ENCODE measurements at regions of chr6 and their contacts with region 1.

Region 1: GRCh38 chr6:24902782-24903181 is 33.0 kb downstream of the RIPOR2 start:
- DNase-seq: no peak
- H3K4me3 Mint-ChIP-seq: no peak overlapping the region
- H3K27ac Mint-ChIP-seq: peak overlapping the region; percentile 84
- H3K4me1 Mint-ChIP-seq: peaks cover 90% of the 10 kb centered on the region
- H3K27me3 Mint-ChIP-seq: no peaks in the 10 kb centered on the region

Region 2: GRCh38 chr6:24891004-24891403 is 11.8 kb before region 1 on chr6:
- CTCF ChIA-PET with region 1: interaction called, 18 read pairs
- intact Hi-C with region 1: loop called (anchors 1 kb)
- DNase-seq: peak; percentile 31
- H3K4me3 Mint-ChIP-seq: peak overlapping the region; percentile 25
- H3K27ac Mint-ChIP-seq: peak overlapping the region; percentile 90
- H3K4me1 Mint-ChIP-seq: peaks cover 91% of the 10 kb centered on the region
- H3K27me3 Mint-ChIP-seq: no peaks in the 10 kb centered on the region

Region 3: GRCh38 chr6:25181923-25182322 is 279.1 kb after region 1 on chr6:
- CTCF ChIA-PET with region 1: no interaction called
- intact Hi-C with region 1: no loop called
- DNase-seq: no peak
- H3K4me3 Mint-ChIP-seq: no peak overlapping the region
- H3K27ac Mint-ChIP-seq: no peak overlapping the region
- H3K4me1 Mint-ChIP-seq: peaks cover 24% of the 10 kb centered on the region
- H3K27me3 Mint-ChIP-seq: peaks cover 4% of the 10 kb centered on the region

Region 4: DNA sequence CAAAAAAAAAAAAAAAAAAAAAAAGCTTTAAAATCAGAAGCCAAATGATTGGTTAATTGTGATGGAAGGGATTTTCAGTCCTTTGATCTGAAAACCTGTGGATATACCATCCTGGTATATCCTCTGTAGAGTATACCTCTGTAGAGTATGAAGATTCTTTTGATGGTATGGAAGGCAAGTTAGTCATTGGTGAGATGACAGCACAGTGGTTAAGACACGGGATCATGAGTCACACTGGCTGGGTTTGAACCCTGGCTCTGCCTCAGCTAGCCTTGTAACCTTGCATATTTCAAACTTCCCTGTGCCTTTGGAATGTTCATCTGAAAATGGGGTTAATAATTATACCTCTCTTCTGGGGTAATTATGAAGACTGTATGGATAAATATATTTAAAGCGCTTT is 555.7 kb after region 1 on chr6:
- CTCF ChIA-PET with region 1: no interaction called
- intact Hi-C with region 1: no loop called
- DNase-seq: peak; percentile 55
- H3K4me3 Mint-ChIP-seq: no peak overlapping the region
- H3K27ac Mint-ChIP-seq: no peak overlapping the region
- H3K4me1 Mint-ChIP-seq: no peaks in the 10 kb centered on the region
- H3K27me3 Mint-ChIP-seq: no peaks in the 10 kb centered on the region